Esophagus squamous epithelium (tissue), 5 donors: ENCODE measurements at regions of chr5 and their contacts with region 1.

Region 1: DNA sequence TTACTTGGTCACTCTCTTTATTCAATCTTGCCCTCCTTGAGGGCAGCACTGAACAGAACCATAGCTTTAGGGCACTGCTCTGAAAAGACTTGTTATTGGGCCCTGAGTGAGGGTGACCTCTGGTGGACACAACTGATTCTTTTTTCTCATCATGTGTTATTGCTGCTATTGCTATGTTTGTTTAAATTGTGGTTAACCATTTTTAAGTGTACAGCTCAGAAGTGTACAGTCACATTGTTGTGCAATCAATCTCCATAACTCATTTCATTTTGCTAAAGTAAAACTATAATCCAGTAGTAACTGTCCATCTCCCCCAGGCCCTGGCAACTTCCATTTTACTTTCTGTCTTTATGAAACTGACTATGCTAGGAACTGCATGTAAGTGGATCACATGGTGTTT is 351.1 kb upstream of the RIOK2 start:
- DNase-seq: no peak
- H3K4me3 ChIP-seq: no peak overlapping the region
- H3K27ac ChIP-seq: no peak overlapping the region
- H3K4me1 ChIP-seq: no peaks in the 10 kb centered on the region
- H3K27me3 ChIP-seq: no peaks in the 10 kb centered on the region
- CTCF ChIP-seq: peak in 5 of 6 experiments; percentile 22 to 62 (median 34)
- POLR2A ChIP-seq: no peak

Region 2: DNA sequence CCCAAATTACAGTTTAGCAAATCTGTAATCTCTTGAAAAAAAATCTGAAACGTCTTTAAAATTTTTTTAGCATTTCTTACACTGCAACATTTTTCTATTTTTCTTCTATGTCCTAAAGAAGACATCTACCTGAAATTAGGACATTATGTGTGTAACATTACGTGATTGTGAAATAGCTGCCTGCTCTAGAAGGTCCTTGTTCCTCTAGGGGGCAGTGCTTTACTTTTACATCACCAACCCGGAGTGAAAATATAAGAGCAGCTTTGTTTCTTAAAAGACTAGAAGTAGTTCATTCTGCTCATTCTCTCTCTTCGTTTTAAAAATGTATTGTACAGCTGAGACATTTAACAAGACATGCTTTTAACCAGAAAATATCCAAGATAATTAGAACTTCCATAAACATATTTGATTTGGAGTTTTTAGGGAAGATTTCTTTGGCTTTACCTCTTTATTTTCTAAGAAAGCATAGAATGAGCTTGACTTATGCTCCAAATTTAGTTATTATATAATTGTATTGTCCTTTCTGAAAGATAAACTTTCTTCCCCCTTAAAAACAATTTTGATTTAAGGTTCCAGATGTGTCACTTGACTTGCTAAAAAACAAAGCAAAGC is 303.0 kb before region 1 on chr5:
- intact Hi-C with region 1: loop called (anchors 5 kb)
- DNase-seq: no peak
- H3K4me3 ChIP-seq: no peak overlapping the region
- H3K27ac ChIP-seq: no peak overlapping the region
- H3K4me1 ChIP-seq: peaks cover 0 to 3% (median 0%) of the 10 kb centered on the region in 3 donors
- H3K27me3 ChIP-seq: no peaks in the 10 kb centered on the region
- CTCF ChIP-seq: peak; percentile 40 to 79 (median 70)
- POLR2A ChIP-seq: no peak

Region 3: DNA sequence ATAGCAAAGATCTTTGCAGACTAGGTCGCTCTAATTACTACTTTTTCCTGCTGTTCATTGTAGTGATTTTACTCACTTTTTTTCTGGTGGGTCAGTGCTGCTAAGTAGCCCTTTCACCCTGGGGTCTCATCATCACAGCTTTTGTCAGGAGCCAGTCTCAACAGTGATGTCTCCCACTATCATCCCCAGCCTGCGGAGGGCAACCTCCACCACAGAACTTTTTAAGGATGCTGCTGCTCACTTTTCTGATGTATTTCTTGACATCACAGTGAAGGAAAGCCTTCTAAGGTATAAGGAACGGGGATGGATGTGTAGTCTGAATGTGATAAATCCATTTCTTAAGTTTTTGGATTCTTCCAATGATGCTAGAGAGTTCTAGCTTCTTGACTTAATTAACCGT is 108.7 kb before region 1 on chr5:
- intact Hi-C with region 1: no loop called
- DNase-seq: no peak
- H3K4me3 ChIP-seq: no peak overlapping the region
- H3K27ac ChIP-seq: no peak overlapping the region
- H3K4me1 ChIP-seq: no peaks in the 10 kb centered on the region
- H3K27me3 ChIP-seq: no peaks in the 10 kb centered on the region
- CTCF ChIP-seq: peak in 2 of 6 experiments; percentile 12 to 32
- POLR2A ChIP-seq: no peak

Region 4: GRCh38 chr5:97458851-97459250 is 75.3 kb before region 1 on chr5:
- intact Hi-C with region 1: no loop called
- DNase-seq: no peak
- H3K4me3 ChIP-seq: no peak overlapping the region
- H3K27ac ChIP-seq: no peak overlapping the region
- H3K4me1 ChIP-seq: no peaks in the 10 kb centered on the region
- H3K27me3 ChIP-seq: no peaks in the 10 kb centered on the region
- CTCF ChIP-seq: no peak
- POLR2A ChIP-seq: no peak

Region 5: GRCh38 chr5:97576956-97577355 is 42.8 kb after region 1 on chr5:
- intact Hi-C with region 1: no loop called
- DNase-seq: no peak
- H3K4me3 ChIP-seq: no peak overlapping the region
- H3K27ac ChIP-seq: no peak overlapping the region
- H3K4me1 ChIP-seq: no peaks in the 10 kb centered on the region
- H3K27me3 ChIP-seq: no peaks in the 10 kb centered on the region
- CTCF ChIP-seq: no peak
- POLR2A ChIP-seq: no peak

Region 6: DNA sequence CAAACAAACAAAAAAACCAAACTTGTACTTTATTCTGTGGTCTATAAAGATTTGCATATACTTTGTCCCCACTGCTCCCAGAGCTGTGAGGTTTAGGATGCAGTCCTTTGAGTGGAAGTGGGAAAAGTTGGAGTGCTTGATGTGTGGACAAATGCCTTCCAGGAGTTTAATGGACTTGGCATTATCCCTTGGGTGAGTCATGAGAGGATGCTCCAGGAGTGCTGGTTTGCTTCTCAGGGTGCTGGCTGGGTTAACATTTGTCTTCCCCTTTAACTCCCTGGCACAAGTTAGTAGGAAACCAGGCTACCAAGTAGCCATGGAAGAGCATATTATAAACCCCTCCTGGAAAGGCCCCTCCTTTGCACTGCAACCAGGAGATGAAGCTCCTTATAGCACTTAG is 66.3 kb after region 1 on chr5:
- intact Hi-C with region 1: no loop called
- DNase-seq: no peak
- H3K4me3 ChIP-seq: no peak overlapping the region
- H3K27ac ChIP-seq: no peak overlapping the region
- H3K4me1 ChIP-seq: no peaks in the 10 kb centered on the region
- H3K27me3 ChIP-seq: no peaks in the 10 kb centered on the region
- CTCF ChIP-seq: no peak
- POLR2A ChIP-seq: no peak